ENCODE measurements at regions of chr5 and their contacts with region 1.

Region 1: DNA sequence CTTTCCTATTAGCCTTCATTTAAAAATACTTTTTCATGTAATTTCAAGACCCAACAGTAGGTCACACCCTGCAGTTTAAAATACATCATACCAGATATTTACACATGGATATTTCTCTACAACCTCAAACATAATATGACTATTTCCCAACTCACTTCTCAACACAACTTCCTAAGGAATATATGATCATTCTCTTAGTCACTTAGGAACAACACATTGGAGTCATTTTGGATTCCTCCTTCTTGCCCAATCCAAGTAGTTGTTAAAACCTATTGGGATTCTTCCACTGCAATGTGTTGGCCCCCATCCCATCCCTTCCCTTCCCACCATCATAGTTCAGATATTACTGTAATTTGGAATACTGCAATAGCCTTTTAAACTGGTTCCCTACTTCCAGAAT is 145.5 kb downstream of the DCP2 start:
- DNase-seq: no peak
- H3K4me3 ChIP-seq: no peak overlapping the region
- H3K27ac ChIP-seq: no peak overlapping the region
- H3K4me1 ChIP-seq: peaks cover 0 to 13% (median 0%) of the 10 kb centered on the region in 4 donors
- H3K27me3 ChIP-seq: no peaks in the 10 kb centered on the region
- CTCF ChIP-seq: no peak
- EP300 ChIP-seq: no peak
- POLR2A ChIP-seq: no peak

Region 2: GRCh38 chr5:113294311-113295110 is 172.5 kb after region 1 on chr5:
- in situ Hi-C with region 1: no loop called
- intact Hi-C with region 1: loop called (anchors 1 kb)
- DNase-seq: peak; percentile 88
- H3K4me3 ChIP-seq: peak overlapping the region; percentile 64 to 87 (median 72)
- H3K27ac ChIP-seq: peak overlapping the region; percentile 85 to 91 (median 88)
- H3K4me1 ChIP-seq: peaks cover 0 to 16% (median 12%) of the 10 kb centered on the region in 4 donors
- H3K27me3 ChIP-seq: peaks cover 18% of the 10 kb centered on the region
- CTCF ChIP-seq: no peak
- EP300 ChIP-seq: no peak
- POLR2A ChIP-seq: peak; percentile 64